AG04450 (cell line): ENCODE measurements at regions of chr13 and their contacts with region 1.

Region 1: GRCh38 chr13:72696579-72696978 is 30.9 kb downstream of the MZT1 start:
- DNase-seq: no peak
- H3K4me3 ChIP-seq: no peak overlapping the region
- H3K27ac ChIP-seq: no peak overlapping the region
- H3K27me3 ChIP-seq: peaks cover 2% of the 10 kb centered on the region
- CTCF ChIP-seq: peak; percentile 38

Region 2: GRCh38 chr13:72643311-72643989 is 53.1 kb before region 1 on chr13:
- CTCF ChIA-PET with region 1: interaction called, 69 read pairs
- POLR2A ChIA-PET with region 1: no interaction called
- DNase-seq: peak; percentile 2
- H3K4me3 ChIP-seq: no peak overlapping the region
- H3K27ac ChIP-seq: no peak overlapping the region
- H3K27me3 ChIP-seq: no peaks in the 10 kb centered on the region
- CTCF ChIP-seq: peak; percentile 83